Activated T-helper 2 cell treated with anti-CD3 and anti-CD28 coated beads, Interferon-gamma antibody, Interleukin-2, Interleukin-4, amounts not matched to agents 10 μg/mL and 5 μg/mL and 100 μg/mL, durations not matched to agents 14 hours and 24 hours and 36 hours (primary cell): ENCODE measurements at regions of chr1 and their contacts with region 1.

Region 1: DNA sequence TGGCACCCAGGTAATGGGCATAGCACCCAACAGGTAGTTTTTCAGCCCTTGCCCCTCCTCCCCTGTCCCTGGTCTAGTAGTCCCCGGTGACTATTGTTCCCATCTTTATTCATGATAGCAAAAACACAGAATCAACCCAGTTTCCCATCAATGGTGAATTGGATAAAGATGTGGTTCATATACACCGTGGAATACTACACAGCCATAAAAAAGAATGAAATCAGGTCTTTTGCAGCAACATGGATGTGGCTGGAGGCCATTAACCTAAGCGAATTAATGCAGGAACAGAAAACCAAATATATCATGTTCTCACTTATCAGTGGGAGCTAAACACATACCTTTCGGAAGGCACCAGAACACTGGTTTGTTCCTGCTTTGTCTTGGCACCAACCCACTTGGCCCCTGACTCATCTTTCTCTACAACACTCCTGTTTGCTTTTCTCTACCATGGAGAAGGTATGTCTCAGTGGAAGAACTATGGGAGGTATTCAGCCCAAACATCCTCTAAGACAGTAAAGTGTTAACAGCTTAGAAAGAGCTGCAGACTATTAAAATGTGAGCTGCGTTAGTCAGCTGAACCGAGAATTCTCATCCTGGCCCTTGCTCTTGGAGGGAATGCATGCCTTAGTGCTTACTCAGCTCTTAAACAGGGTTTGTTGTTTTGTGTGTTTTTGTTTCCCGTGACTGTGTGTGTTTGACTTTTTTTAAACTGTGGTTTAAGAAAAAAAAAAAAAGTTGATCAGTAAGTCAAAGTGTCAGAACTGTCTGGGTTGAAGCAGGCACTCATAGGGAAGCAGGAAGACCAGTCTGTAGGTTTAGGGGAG is 203.0 kb downstream of the TOMM20 start:
- DNase-seq: no peak
- H3K4me3 Mint-ChIP-seq: peak overlapping the region; percentile 72
- H3K27ac Mint-ChIP-seq: peak overlapping the region; percentile 98
- H3K4me1 Mint-ChIP-seq: peaks cover 58% of the 10 kb centered on the region
- H3K27me3 Mint-ChIP-seq: no peaks in the 10 kb centered on the region

Region 2: DNA sequence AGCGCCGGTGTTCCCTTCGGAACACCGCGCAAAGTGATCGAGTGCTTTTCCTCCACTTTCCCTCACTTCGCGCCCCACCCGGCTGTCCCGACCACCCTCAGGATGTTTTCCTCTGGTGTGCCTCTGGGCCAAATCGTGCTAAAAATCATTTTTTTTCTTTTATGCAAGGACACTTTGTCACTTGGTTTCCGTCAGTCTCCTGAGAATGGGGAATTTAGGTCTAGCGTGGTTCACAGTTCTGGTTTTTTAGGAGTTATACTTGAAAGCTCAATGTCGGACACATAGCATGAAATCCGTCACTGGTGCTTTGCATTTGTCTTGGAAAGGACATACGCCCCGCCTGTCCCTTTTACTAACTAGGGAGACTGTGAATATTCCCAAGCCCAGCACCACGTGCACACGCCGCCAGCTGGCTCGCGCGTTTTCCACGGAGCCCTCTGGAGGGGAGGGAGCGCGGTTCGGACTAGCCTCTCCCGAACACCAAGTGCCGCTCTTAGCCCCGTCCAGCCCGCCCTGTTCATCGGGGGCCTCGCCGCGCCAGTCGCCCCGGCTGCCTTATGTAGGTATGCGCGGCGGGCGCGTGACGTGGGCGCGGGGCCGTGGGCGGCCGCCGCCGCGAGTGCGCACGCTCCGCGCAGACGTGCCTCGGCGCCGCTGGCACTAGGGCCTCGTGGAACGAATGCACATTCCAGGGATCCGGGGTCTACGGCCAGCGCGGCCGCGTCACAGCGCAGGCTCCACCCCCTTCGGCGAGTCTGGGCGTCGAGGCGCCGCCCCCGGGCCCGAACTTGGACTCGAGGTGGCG is 315.1 kb before region 1 on chr1:
- intact Hi-C with region 1: loop called (anchors 2 kb)
- DNase-seq: peak; percentile 86
- H3K4me3 Mint-ChIP-seq: peak overlapping the region; percentile 88
- H3K27ac Mint-ChIP-seq: peak overlapping the region; percentile 98
- H3K4me1 Mint-ChIP-seq: peaks cover 39% of the 10 kb centered on the region
- H3K27me3 Mint-ChIP-seq: peaks cover 2% of the 10 kb centered on the region

Region 3: DNA sequence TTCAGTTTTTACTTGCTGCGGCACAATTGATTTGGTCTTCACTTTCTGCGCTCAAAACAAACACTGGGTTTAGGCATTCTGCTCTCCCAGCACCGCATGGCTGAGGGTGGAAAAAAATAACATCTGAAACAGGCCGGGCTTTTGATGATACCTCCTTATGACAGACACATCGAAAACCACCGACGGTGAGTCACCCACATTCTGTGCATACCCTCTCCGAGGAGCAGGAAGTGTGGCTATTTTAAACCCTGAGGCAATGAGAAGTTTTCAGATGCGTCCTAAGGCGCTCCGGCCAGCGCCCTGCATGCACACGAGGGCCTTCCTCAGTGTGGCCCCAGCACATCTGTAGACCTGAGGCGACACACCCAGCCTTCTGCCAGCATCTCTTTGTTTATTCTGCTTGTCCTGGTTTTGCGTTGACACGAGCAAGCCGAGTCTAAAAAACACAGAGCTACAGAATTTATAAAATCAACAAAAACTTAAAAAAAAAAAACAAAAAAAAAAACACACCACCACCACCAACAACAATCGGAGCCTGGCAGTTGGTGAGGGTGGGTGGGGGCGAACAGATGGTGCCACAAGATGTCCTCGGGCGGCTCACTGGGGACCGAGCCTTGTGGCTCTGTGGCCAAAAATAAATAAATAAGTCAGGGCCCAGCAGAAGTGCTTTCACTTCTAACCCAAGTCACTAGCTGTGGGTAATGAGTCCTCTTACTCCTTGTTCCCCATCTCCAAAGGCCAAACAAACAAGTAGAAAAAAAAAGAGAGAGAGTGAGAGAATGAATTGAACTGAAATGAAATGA is 153.1 kb before region 1 on chr1:
- intact Hi-C with region 1: loop called (anchors 2 kb)
- DNase-seq: peak; percentile 86
- H3K4me3 Mint-ChIP-seq: peak overlapping the region; percentile 71
- H3K27ac Mint-ChIP-seq: peak overlapping the region; percentile 97
- H3K4me1 Mint-ChIP-seq: peaks cover 58% of the 10 kb centered on the region
- H3K27me3 Mint-ChIP-seq: no peaks in the 10 kb centered on the region

Region 4: GRCh38 chr1:234875953-234876855 is 49.4 kb before region 1 on chr1:
- intact Hi-C with region 1: loop called (anchors 1 kb)
- DNase-seq: no peak
- H3K4me3 Mint-ChIP-seq: no peak overlapping the region
- H3K27ac Mint-ChIP-seq: peak overlapping the region; percentile 88
- H3K4me1 Mint-ChIP-seq: peaks cover 63% of the 10 kb centered on the region
- H3K27me3 Mint-ChIP-seq: no peaks in the 10 kb centered on the region

Region 5: DNA sequence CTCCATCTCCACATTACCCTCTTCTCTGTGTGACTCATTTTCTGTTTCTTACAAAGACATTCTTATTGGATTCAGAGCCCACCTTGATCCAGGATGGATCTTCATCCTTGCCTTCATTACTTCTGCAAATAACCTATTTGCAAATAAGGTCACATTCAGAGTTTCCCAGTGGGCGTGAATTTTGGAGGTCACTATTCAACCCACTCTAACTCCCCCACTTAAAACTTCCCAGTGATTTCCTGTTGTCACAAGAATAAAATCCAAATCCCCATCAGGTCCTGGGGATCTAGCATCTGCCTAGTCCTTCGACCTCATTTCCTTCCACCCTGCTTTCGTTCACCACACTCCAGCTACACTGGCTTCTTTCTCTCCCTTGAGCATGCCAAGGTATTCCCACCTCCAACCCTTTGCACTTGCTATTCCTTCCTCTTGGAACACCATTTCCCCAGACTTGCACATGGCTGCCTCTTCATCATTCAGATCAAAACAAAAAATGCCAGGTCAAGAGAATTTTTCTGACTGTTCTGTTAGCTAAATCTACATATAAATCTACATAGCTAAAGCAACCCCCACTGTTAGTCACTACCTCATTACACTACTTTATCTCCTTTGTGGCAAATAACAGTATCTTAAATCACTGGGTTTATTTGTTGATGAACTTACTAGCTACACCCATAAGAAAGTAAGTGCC is 15.8 kb after region 1 on chr1:
- intact Hi-C with region 1: loop called (anchors 1 kb)
- DNase-seq: no peak
- H3K4me3 Mint-ChIP-seq: no peak overlapping the region
- H3K27ac Mint-ChIP-seq: no peak overlapping the region
- H3K4me1 Mint-ChIP-seq: peaks cover 40% of the 10 kb centered on the region
- H3K27me3 Mint-ChIP-seq: no peaks in the 10 kb centered on the region

Region 6: DNA sequence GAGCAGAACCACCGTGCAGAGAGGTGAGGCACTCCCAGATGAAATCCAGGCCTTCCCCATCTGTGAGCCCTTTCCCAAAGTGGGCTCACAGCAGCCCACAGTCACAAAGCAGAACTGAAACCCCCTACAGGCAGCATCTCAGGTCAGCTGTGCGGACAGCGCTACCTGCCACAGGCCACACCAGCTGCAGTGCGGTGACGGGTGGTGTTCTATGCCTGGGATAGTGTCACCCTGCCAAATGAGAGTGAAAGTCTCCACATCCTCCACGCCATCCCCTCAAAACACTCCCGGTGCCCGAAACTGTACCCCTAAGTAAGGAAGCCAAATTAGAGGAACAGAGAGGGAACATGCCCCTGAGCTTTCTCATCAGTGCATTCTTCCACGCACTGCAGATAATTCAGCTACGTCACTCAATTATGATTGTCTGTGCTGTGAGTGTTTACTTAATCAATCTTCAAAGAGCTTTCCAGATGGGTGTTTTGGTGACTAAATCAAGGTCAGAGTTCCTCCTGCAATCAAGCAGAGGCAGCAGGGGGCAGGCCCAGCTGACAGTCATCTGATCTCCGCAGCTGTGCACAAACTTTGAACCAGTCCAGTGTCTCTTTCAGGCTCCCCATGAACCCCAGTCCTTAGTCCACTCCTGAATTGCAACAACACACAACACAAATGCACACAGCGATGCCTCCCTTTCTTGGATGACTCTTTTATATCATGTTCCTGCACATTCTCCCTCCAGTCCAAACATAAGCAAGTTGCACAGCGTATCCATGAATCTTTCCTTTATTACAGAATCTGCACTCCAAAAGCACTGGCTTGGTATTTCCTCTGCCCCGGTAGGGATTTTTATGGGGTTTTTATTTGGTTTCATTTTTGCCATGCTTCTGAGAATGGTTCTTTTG is 53.0 kb after region 1 on chr1:
- intact Hi-C with region 1: loop called (anchors 2 kb)
- DNase-seq: no peak
- H3K4me3 Mint-ChIP-seq: peak overlapping the region; percentile 91
- H3K27ac Mint-ChIP-seq: peak overlapping the region; percentile 97
- H3K4me1 Mint-ChIP-seq: peaks cover 82% of the 10 kb centered on the region
- H3K27me3 Mint-ChIP-seq: no peaks in the 10 kb centered on the region